IMR-90 (cell line): ENCODE measurements at regions of chr4 and their contacts with region 1.

Region 1: GRCh38 chr4:1910643-1911042 is 39.5 kb downstream of the NSD2 start:
- DNase-seq: peak; percentile 66
- ATAC-seq: peak; percentile 94
- H3K4me3 ChIP-seq: no peak overlapping the region
- H3K27ac ChIP-seq: no peak overlapping the region
- H3K4me1 ChIP-seq: no peaks in the 10 kb centered on the region
- H3K27me3 ChIP-seq: no peaks in the 10 kb centered on the region
- CTCF ChIP-seq: peak; percentile 79
- POLR2A ChIP-seq: no peak
- RAD21 ChIP-seq: peak; percentile 80

Region 2: GRCh38 chr4:1748465-1748995 is 162.1 kb before region 1 on chr4:
- CTCF ChIA-PET with region 1: interaction called, 3 read pairs
- POLR2A ChIA-PET with region 1: no interaction called
- dilution Hi-C with region 1: no loop called
- in situ Hi-C with region 1: no loop called
- intact Hi-C with region 1: loop called (anchors 1 kb)
- DNase-seq: peak; percentile 41
- ATAC-seq: peak; percentile 81
- H3K4me3 ChIP-seq: no peak overlapping the region
- H3K27ac ChIP-seq: no peak overlapping the region
- H3K4me1 ChIP-seq: no peaks in the 10 kb centered on the region
- H3K27me3 ChIP-seq: no peaks in the 10 kb centered on the region; the same call in 1 of the 2 replicates
- CTCF ChIP-seq: peak; percentile 77
- POLR2A ChIP-seq: no peak
- RAD21 ChIP-seq: peak; percentile 80